Naive thymus-derived CD4-positive, alpha-beta T cell (primary cell): ENCODE measurements at regions of chr15 and their contacts with region 1.

Region 1: DNA sequence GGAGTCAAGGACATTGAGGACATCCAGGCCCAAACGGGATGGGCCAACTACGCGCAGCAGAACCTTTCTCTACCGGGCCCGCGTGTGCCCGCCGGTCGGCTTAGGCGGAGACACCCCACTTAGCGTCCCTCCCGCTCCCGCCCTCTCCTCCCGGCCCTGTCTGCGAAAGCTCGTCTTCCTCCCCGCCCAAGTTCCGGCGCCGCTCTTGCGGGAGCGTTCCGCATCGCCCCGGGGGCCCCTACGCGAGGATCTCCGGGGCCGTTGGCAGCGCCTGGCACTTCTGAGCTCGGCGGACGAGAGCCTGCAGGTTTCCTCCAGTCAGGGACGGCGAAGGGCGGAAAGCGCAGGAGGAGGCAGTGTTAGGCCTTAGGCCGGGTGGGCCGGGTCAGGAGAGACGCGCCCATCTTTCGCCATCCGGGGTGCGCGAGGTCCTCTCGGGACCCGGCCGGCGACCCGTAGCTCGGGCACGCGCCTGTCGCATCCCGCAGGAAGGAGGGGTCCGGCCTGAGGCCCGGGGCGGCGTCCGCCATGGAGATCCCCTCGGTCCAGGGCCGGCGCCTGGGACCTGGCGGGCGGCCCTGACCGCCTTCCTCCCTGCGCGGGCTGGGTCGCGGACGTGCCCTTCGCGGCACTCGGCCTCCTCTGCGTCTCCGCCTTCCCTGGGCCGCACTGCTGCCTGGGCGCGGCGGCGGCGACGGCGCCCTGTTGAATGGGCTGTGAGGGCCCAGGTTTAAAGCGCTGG is at the start of gene FEM1B:
- DNase-seq: peak; percentile 82 to 92 (median 88)
- ATAC-seq: peak; percentile 89
- H3K4me3 ChIP-seq: peak within 1 kb of the TSS; percentile 92
- H3K4me3 Mint-ChIP-seq: peak within 1 kb of the TSS; percentile 86 to 100 (median 96)
- H3K27ac ChIP-seq: peak within 1 kb of the TSS; percentile 90
- H3K27ac Mint-ChIP-seq: peak within 1 kb of the TSS; percentile 89 to 99 (median 98)
- H3K4me1 ChIP-seq: peaks cover 33 to 38% of the 10 kb centered on the region in 2 donors
- H3K4me1 Mint-ChIP-seq: peaks cover 40 to 63% (median 56%) of the 10 kb centered on the region in 7 donors
- H3K27me3 ChIP-seq: no peaks in the 10 kb centered on the region
- H3K27me3 Mint-ChIP-seq: no peaks in the 10 kb centered on the region
- total RNA-seq, gene FEM1B: 56.5 to 73.2 (median 62.0) TPM

Region 2: GRCh38 chr15:66504563-66505429 is 1773.0 kb before region 1 on chr15 and contains the starts of genes RPL4 and ZWILCH:
- CTCF ChIA-PET with region 1: no interaction called
- POLR2A ChIA-PET with region 1: no interaction called
- intact Hi-C with region 1: loop called in 1 of 2 experiments (anchors 5 kb)
- DNase-seq: peak; percentile 65 to 88 (median 83)
- ATAC-seq: peak; percentile 93
- H3K4me3 ChIP-seq: peak within 1 kb of the TSS; percentile 99
- H3K4me3 Mint-ChIP-seq: peak within 1 kb of the TSS; percentile 90 to 100 (median 100)
- H3K27ac ChIP-seq: peak within 1 kb of the TSS; percentile 93
- H3K27ac Mint-ChIP-seq: peak within 1 kb of the TSS; percentile 92 to 100 (median 99)
- H3K4me1 ChIP-seq: peaks cover 13 to 22% of the 10 kb centered on the region in 2 donors
- H3K4me1 Mint-ChIP-seq: peaks cover 21 to 57% (median 41%) of the 10 kb centered on the region in 7 donors
- H3K27me3 ChIP-seq: no peaks in the 10 kb centered on the region
- H3K27me3 Mint-ChIP-seq: no peaks in the 10 kb centered on the region
- total RNA-seq, gene RPL4: 2,229 to 4,292 (median 4,136) TPM
- total RNA-seq, gene ZWILCH: 5.6 to 20.3 (median 6.8) TPM

Region 3: GRCh38 chr15:68053701-68054627 is 223.8 kb before region 1 on chr15 and contains the start of gene PIAS1:
- CTCF ChIA-PET with region 1: no interaction called
- POLR2A ChIA-PET with region 1: interaction called, 5 read pairs
- intact Hi-C with region 1: loop called (anchors 1 kb)
- DNase-seq: peak; percentile 87 to 94 (median 92)
- ATAC-seq: peak; percentile 96
- H3K4me3 ChIP-seq: peak within 1 kb of the TSS; percentile 87
- H3K4me3 Mint-ChIP-seq: peak within 1 kb of the TSS; percentile 89 to 97 (median 95)
- H3K27ac ChIP-seq: peak within 1 kb of the TSS; percentile 93
- H3K27ac Mint-ChIP-seq: peak within 1 kb of the TSS; percentile 84 to 97 (median 92)
- H3K4me1 ChIP-seq: peaks cover 21 to 35% of the 10 kb centered on the region in 2 donors
- H3K4me1 Mint-ChIP-seq: peaks cover 28 to 46% (median 39%) of the 10 kb centered on the region in 7 donors
- H3K27me3 ChIP-seq: no peaks in the 10 kb centered on the region
- H3K27me3 Mint-ChIP-seq: peaks cover 0 to 15% (median 0%) of the 10 kb centered on the region in 5 donors
- total RNA-seq, gene PIAS1: 41.3 to 103 (median 90.9) TPM

Region 4: DNA sequence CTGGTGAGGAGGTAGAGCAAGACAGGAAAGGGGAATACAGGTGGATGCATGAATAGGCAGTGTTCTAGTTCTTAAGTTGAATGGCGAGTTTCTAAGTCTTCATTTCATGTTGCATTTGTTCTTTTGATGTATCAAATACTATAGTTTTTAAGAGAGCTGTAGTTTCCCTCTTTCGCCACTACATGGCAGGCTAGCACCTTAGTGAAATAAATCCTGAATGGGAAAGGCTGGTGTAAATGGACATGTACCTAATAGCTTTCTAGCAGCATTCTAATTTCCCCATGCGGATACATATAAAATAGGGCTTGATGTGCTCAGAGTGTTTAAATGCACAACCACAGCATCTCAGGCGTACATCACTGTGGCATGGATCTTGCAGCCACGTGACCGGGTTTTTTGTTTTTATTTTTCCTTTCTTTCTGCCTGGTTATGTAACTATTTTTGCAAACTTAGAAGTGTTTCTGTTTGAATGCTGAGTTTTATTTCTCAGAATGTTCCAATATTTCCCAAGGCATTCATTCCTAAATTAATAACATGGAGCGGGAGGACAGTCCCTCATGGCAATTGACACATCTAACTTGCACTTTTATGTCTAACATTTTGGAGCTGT is 24.7 kb before region 1 on chr15:
- CTCF ChIA-PET with region 1: interaction called, 9 read pairs
- POLR2A ChIA-PET with region 1: interaction called, 66 read pairs
- intact Hi-C with region 1: loop called (anchors 1 kb)
- DNase-seq: peak in 7 of 9 donors; percentile 42 to 64 (median 56)
- ATAC-seq: peak; percentile 72
- H3K4me3 ChIP-seq: no peak overlapping the region
- H3K4me3 Mint-ChIP-seq: no peak overlapping the region
- H3K27ac ChIP-seq: no peak overlapping the region
- H3K27ac Mint-ChIP-seq: no peak overlapping the region
- H3K4me1 ChIP-seq: no peaks in the 10 kb centered on the region
- H3K4me1 Mint-ChIP-seq: peaks cover 0 to 14% (median 4%) of the 10 kb centered on the region in 7 donors
- H3K27me3 ChIP-seq: no peaks in the 10 kb centered on the region
- H3K27me3 Mint-ChIP-seq: peaks cover 0 to 33% (median 0%) of the 10 kb centered on the region in 5 donors

Region 5: GRCh38 chr15:68298882-68299381 is 21.2 kb after region 1 on chr15:
- CTCF ChIA-PET with region 1: interaction called, 4 read pairs
- POLR2A ChIA-PET with region 1: interaction called, 31 read pairs
- intact Hi-C with region 1: loop called (anchors 1 to 2 kb)
- DNase-seq: peak in 7 of 9 donors; percentile 37 to 56 (median 40)
- ATAC-seq: peak; percentile 82
- H3K4me3 ChIP-seq: peak overlapping the region; percentile 61
- H3K4me3 Mint-ChIP-seq: peak overlapping the region; percentile 58 to 85 (median 81)
- H3K27ac ChIP-seq: peak overlapping the region; percentile 64
- H3K27ac Mint-ChIP-seq: peak overlapping the region; percentile 79 to 95 (median 87)
- H3K4me1 ChIP-seq: peaks cover 11 to 16% of the 10 kb centered on the region in 2 donors
- H3K4me1 Mint-ChIP-seq: peaks cover 17 to 56% (median 44%) of the 10 kb centered on the region in 7 donors
- H3K27me3 ChIP-seq: no peaks in the 10 kb centered on the region
- H3K27me3 Mint-ChIP-seq: no peaks in the 10 kb centered on the region

Region 6: DNA sequence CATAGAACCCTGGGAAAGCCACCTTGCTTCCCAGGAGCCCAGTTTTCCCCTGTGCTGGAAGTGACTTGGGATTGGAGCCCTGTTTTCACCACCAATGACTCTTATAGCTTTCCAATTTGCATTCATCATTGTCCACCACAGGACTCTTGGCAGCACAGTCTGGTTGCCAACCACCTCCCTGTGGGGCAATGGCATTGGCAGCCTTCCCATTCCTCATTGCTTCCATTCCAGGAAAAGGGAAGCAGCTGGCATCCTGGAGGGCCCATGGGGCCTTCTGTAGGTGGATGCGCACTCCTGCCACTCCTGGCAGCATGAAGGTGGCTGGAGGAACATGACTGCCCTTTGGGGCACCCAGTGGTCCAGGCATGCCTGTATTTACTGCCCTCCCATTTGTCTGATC is 57.5 kb after region 1 on chr15:
- CTCF ChIA-PET with region 1: no interaction called
- POLR2A ChIA-PET with region 1: no interaction called
- intact Hi-C with region 1: no loop called
- DNase-seq: no peak
- ATAC-seq: no peak
- H3K4me3 ChIP-seq: no peak overlapping the region
- H3K4me3 Mint-ChIP-seq: no peak overlapping the region
- H3K27ac ChIP-seq: no peak overlapping the region
- H3K27ac Mint-ChIP-seq: no peak overlapping the region
- H3K4me1 ChIP-seq: no peaks in the 10 kb centered on the region
- H3K4me1 Mint-ChIP-seq: peaks cover 0 to 9% (median 0%) of the 10 kb centered on the region in 7 donors
- H3K27me3 ChIP-seq: no peaks in the 10 kb centered on the region
- H3K27me3 Mint-ChIP-seq: peaks cover 0 to 17% (median 8%) of the 10 kb centered on the region in 5 donors

Region 7: GRCh38 chr15:68820295-68821189 is 542.8 kb after region 1 on chr15 and contains the start of gene ANP32A:
- CTCF ChIA-PET with region 1: no interaction called
- POLR2A ChIA-PET with region 1: interaction called, 6 read pairs
- intact Hi-C with region 1: loop called (anchors 5 kb)
- DNase-seq: peak; percentile 90 to 99 (median 95)
- ATAC-seq: peak; percentile 85
- H3K4me3 ChIP-seq: peak within 1 kb of the TSS; percentile 99
- H3K4me3 Mint-ChIP-seq: peak within 1 kb of the TSS; percentile 85 to 100 (median 92)
- H3K27ac ChIP-seq: peak within 1 kb of the TSS; percentile 91
- H3K27ac Mint-ChIP-seq: peak within 1 kb of the TSS; percentile 84 to 100 (median 92)
- H3K4me1 ChIP-seq: peaks cover 19 to 23% of the 10 kb centered on the region in 2 donors
- H3K4me1 Mint-ChIP-seq: peaks cover 22 to 37% (median 34%) of the 10 kb centered on the region in 7 donors
- H3K27me3 ChIP-seq: no peaks in the 10 kb centered on the region
- H3K27me3 Mint-ChIP-seq: no peaks in the 10 kb centered on the region
- total RNA-seq, gene ANP32A: 86.1 to 229 (median 136) TPM